Colonic mucosa (tissue), 4 donors: ENCODE measurements at regions of chr5 and their contacts with region 1.

Region 1: GRCh38 chr5:38441453-38442246 is 114.8 kb downstream of the LIFR start:
- DNase-seq: peak; percentile 86
- H3K4me3 ChIP-seq: no peak overlapping the region
- H3K27ac ChIP-seq: no peak overlapping the region
- H3K4me1 ChIP-seq: no peaks in the 10 kb centered on the region
- H3K27me3 ChIP-seq: no peaks in the 10 kb centered on the region
- CTCF ChIP-seq: peak; percentile 97

Region 2: DNA sequence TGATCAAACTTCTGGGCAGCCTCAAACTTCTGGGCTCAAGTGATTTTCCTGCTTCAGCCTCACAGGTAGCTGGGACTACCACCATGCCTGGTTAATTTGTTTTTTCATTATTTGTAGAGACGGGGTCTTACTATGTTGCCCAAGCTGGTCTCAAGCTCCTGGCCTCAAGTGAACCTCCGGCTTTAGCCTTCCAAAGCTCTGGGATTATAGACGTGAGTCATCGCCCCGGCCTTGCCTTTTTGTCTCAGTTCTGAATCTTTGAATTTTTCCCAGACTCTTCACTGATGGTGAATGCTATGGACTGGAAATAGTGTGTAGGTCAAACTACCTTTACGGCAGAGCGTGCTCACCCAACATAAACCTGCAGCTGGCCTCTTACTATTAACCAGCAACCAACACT is 215.6 kb before region 1 on chr5:
- intact Hi-C with region 1: no loop called
- DNase-seq: no peak
- H3K4me3 ChIP-seq: no peak overlapping the region
- H3K27ac ChIP-seq: no peak overlapping the region
- H3K4me1 ChIP-seq: no peaks in the 10 kb centered on the region
- H3K27me3 ChIP-seq: no peaks in the 10 kb centered on the region
- CTCF ChIP-seq: no peak

Region 3: GRCh38 chr5:38639377-38640332 is 198.0 kb after region 1 on chr5:
- intact Hi-C with region 1: no loop called
- DNase-seq: no peak
- H3K4me3 ChIP-seq: no peak overlapping the region
- H3K27ac ChIP-seq: no peak overlapping the region
- H3K4me1 ChIP-seq: no peaks in the 10 kb centered on the region
- H3K27me3 ChIP-seq: no peaks in the 10 kb centered on the region
- CTCF ChIP-seq: no peak

Region 4: DNA sequence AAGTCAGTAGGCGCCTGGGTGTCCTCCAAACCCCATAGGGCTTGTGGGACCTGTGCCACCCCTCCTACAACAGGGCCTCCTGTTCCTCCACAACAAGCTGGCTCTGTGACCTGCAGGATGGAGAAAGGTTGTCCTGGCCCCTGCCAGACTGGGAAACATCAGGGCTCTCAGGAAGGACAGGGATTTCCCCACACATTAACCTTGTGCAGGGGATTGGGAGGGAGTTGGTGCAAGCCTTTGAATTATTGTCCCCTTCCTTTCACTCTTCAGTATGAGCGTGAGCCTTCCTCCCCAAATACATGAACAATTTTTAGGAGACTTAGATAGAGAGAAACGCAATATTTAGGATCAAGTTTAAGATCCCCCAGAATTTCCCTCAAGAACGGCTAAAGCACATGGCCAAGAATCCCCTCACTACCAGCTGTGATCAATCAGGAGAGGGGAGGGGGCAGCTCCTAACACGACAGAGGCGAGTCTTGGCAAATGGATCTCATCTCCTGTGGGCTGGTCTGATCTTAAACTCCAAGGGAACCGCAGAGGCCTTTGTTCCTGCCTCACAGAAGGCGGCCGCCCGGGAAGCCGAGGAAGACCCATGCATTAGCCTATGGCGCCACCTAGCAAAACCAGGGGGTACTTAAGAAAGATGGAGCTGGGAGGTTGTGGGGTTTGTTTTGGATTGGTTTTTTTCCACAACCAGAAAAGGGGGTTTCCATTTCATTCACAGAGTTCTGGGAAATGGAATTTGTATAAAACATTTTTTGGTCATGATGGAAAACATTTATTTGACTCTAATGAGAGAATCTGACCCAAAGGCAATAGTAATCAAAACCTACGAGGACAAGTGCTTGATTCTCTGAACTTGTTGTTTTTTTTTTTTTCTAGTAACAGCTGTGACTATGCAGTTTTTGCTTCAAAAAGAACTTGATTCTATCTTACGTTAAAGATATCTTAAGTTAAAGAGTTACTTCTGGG is 368.0 kb after region 1 on chr5:
- intact Hi-C with region 1: loop called (anchors 5 kb)
- DNase-seq: peak; percentile 70
- H3K4me3 ChIP-seq: no peak overlapping the region
- H3K27ac ChIP-seq: no peak overlapping the region
- H3K4me1 ChIP-seq: no peaks in the 10 kb centered on the region
- H3K27me3 ChIP-seq: no peaks in the 10 kb centered on the region
- CTCF ChIP-seq: peak; percentile 73